ENCODE measurements at regions of chr11 and their contacts with region 1.

Region 1: GRCh38 chr11:8813658-8814057 is 97.3 kb upstream of the AKIP1 start:
- DNase-seq: peak; percentile 74
- H3K4me3 ChIP-seq: no peak overlapping the region
- H3K27ac ChIP-seq: peak overlapping the region; percentile 39
- H3K27me3 ChIP-seq: no peaks in the 10 kb centered on the region
- CTCF ChIP-seq: peak; percentile 97

Region 2: GRCh38 chr11:8577791-8578581 is 235.7 kb before region 1 on chr11:
- CTCF ChIA-PET with region 1: no interaction called
- POLR2A ChIA-PET with region 1: no interaction called
- DNase-seq: no peak
- H3K4me3 ChIP-seq: no peak overlapping the region
- H3K27ac ChIP-seq: no peak overlapping the region
- H3K27me3 ChIP-seq: no peaks in the 10 kb centered on the region
- CTCF ChIP-seq: no peak

Region 3: DNA sequence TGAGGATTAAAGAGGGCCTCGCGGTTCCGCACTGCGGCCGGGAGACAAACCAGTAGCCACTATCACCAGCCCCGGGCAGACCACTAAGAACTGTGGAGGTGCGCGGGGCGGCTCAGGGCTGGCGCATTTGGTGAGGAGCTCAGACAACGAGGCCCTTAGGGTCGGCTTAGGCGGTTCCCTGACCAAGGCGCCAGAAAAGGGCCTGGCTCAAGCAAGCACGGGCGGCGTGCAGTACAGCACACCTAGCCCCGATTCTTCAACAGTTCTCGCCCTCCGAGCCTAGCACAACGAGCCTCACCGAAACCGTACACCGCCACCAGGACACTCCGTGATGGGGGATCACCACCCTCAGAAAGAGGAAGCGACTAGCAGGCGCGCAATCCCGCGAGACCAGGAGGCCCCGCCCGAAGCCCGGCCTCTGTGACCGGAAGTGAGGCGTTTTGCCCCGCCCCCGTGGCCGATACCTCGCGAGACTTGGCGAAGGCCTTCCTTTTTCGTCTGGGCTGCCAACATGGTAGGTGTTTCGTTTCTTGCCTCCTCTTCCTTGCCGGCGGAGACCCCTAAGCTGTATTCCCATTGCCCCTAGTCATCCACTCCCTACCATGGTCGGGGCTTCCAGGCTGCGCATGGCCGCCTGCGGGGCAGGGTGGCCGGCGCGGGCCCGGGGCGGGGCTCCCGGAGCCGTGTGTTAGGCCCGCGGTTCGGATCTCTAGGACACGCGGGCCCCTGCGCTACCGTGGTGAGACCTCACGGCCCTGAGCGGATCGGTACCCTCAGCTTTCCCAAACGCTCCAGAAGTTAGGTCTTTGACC is 131.1 kb before region 1 on chr11 and contains the starts of genes RPL27A and TRIM66:
- CTCF ChIA-PET with region 1: no interaction called
- POLR2A ChIA-PET with region 1: interaction called, 14 read pairs
- DNase-seq: peak; percentile 91
- H3K4me3 ChIP-seq: peak within 1 kb of the TSS; percentile 76
- H3K27ac ChIP-seq: peak within 1 kb of the TSS; percentile 91
- H3K27me3 ChIP-seq: no peaks in the 10 kb centered on the region
- CTCF ChIP-seq: peak; percentile 29
- polyA plus RNA-seq, gene RPL27A: 941 and 1,068 TPM in 2 replicates
- polyA plus RNA-seq, gene TRIM66: 4.2 and 6.3 TPM in 2 replicates

Region 4: DNA sequence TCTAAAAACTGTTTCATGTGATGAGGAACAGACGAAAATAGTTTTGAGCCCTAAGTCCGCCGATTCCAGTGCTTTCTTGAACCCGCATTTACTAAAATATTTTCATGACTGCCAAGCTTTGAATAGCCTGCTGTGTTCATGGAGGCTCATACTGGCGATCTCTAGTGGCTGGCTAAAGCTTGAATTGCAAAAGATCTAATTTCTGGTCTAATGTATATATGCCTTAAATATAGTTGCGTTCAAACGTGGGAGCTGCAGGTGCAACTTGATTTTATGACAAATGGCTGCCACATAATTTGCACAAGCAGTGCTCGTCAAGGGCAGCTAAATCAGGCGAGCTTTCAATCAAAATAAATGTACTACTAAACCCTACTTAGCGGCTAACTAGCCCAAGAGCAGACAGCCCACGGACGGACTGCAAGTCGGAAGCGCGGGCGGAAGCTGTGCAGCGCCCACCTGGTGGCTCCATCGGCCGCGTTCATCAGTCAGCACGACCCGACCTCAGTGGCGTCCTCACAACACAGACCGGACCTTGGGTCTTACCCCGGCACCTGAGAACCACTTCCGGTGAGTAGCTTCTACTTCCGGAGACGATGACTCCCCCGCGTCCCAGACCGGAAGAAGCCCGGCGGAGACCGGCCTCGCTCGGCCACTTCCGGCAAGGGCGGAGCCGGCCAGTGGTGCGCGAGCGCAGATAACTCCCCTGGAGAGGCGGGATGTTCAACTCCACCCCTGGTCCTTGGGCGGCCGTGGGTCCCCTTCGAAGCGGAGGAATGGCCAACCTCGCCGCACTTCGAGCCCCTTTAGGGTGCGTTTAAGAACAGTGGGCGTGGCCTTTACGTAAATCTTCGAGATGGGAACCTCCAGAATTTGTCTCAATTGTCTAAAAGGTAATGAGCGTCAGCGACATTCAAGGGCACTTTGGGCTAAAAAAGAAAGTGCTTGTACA is 125.0 kb before region 1 on chr11:
- CTCF ChIA-PET with region 1: interaction called, 4 read pairs
- POLR2A ChIA-PET with region 1: interaction called, 26 read pairs
- DNase-seq: peak; percentile 90
- H3K4me3 ChIP-seq: peak overlapping the region; percentile 62
- H3K27ac ChIP-seq: peak overlapping the region; percentile 62
- H3K27me3 ChIP-seq: no peaks in the 10 kb centered on the region
- CTCF ChIP-seq: no peak; the same call in 1 of the 2 replicates

Region 5: DNA sequence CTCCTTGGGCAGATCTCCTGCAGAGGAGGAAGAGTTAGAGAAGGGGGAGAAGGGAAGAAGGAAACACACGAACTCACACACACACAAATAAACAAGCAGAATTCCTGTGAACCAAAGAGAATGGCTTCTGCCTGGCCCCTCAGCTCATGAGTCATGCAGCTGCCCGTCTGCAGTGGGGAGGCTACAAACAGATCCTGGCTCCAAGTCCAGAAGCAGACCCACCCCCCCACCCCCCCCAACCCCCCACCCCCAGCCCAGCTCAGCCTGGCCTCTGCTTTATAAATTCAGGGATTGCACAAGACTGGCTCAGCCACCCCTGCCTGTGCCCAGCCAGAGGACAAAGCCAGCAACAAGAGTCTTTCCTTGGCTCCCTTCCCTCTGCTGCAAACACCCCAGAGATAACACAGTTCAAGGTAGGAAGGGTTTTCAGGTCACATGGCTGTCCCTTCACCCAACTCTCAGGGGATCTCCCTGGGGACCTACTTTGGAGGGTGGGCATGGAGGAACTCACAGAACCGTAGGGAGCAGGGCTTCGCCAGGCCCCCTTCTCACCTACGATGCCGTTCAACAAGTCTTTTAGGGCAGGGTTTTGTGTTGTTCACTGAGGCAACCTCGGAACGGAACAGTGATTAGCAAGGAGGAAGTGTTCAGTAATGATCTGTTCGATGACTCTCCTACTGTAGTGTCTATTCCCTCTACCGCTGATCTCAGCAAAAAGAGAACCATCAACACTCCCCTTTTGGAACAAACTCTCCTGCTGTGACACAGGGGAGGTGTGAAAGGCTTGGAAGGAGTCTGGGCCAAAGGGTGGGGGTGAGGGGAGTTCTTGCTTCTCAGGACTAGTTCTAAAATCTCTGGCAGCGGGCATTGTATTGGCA is 95.5 kb before region 1 on chr11:
- CTCF ChIA-PET with region 1: no interaction called
- POLR2A ChIA-PET with region 1: interaction called, 12 read pairs
- DNase-seq: peak; percentile 89
- H3K4me3 ChIP-seq: peak overlapping the region; percentile 49
- H3K27ac ChIP-seq: peak overlapping the region; percentile 96
- H3K27me3 ChIP-seq: no peaks in the 10 kb centered on the region
- CTCF ChIP-seq: no peak

Region 6: GRCh38 chr11:8739309-8739793 is 74.3 kb before region 1 on chr11:
- CTCF ChIA-PET with region 1: no interaction called
- POLR2A ChIA-PET with region 1: no interaction called
- DNase-seq: no peak
- H3K4me3 ChIP-seq: no peak overlapping the region
- H3K27ac ChIP-seq: no peak overlapping the region
- H3K27me3 ChIP-seq: no peaks in the 10 kb centered on the region
- CTCF ChIP-seq: no peak

Region 7: GRCh38 chr11:8826139-8826786 is 12.6 kb after region 1 on chr11:
- CTCF ChIA-PET with region 1: interaction called, 12 read pairs
- POLR2A ChIA-PET with region 1: interaction called, 6 read pairs
- DNase-seq: peak; percentile 75
- H3K4me3 ChIP-seq: no peak overlapping the region
- H3K27ac ChIP-seq: peak overlapping the region; percentile 93
- H3K27me3 ChIP-seq: no peaks in the 10 kb centered on the region
- CTCF ChIP-seq: no peak

Region 8: GRCh38 chr11:8832571-8833260 is 19.1 kb after region 1 on chr11:
- CTCF ChIA-PET with region 1: interaction called, 12 read pairs
- POLR2A ChIA-PET with region 1: interaction called, 7 read pairs
- DNase-seq: peak; percentile 66
- H3K4me3 ChIP-seq: no peak overlapping the region
- H3K27ac ChIP-seq: peak overlapping the region; percentile 94
- H3K27me3 ChIP-seq: no peaks in the 10 kb centered on the region
- CTCF ChIP-seq: no peak

Measured in AG04450 (cell line).